Caco-2 (cell line): ENCODE measurements at regions of chr1 and their contacts with region 1.

Region 1: DNA sequence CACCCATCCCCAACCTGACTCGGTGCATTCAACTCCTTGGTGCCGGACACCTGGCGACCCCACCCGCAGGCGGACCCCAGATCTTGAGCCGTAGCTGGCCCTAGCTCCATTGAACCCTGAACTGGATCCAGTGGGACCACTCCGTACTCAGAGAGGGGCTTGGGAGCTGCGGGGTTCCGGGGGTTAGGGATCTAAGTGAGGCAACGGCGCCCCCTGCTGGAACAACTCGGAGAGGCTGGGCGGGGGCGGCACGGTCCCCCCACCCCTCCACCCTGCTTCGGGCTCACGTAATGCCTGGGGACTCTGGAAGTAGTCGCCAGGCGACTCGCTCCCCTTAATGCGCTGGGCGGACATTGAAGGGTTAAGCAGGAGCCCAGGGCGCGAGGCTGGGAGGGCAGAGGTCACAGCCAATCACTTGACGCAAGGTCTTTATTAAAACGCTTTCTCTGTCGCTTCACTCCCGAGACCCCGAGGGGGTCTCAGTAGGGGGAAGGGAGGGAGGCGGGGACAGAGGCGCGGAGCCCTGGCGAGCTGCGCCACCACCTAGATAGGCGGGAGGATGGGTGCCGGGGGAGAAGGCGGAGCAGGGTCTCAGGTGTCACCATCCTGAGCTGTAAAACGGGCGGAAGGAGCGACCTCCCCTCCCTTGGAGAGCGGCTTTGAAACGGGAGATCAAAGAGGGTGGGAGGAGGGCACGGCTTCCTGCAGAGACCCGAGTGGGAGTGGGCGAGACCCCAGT is 704 bp upstream of the CRABP2 start:
- DNase-seq: peak; percentile 79 to 83
- H3K4me3 ChIP-seq: peak overlapping the region; percentile 53
- H3K4me3 Mint-ChIP-seq: peak overlapping the region; percentile 90
- H3K27ac Mint-ChIP-seq: peak overlapping the region; percentile 86
- H3K4me1 ChIP-seq: peaks cover 7% of the 10 kb centered on the region
- H3K4me1 Mint-ChIP-seq: peaks cover 16% of the 10 kb centered on the region
- H3K27me3 ChIP-seq: no peaks in the 10 kb centered on the region
- H3K27me3 Mint-ChIP-seq: no peaks in the 10 kb centered on the region
- CTCF ChIP-seq: peak; percentile 73 to 87

Region 2: GRCh38 chr1:156848461-156849150 is 142.5 kb after region 1 on chr1:
- CTCF ChIA-PET with region 1: interaction called, 10 read pairs
- POLR2A ChIA-PET with region 1: no interaction called
- intact Hi-C with region 1: no loop called
- DNase-seq: no peak
- H3K4me3 ChIP-seq: no peak overlapping the region
- H3K4me3 Mint-ChIP-seq: no peak overlapping the region
- H3K27ac Mint-ChIP-seq: no peak overlapping the region
- H3K4me1 ChIP-seq: no peaks in the 10 kb centered on the region
- H3K4me1 Mint-ChIP-seq: no peaks in the 10 kb centered on the region
- H3K27me3 ChIP-seq: no peaks in the 10 kb centered on the region
- H3K27me3 Mint-ChIP-seq: no peaks in the 10 kb centered on the region
- CTCF ChIP-seq: no peak